ENCODE measurements at regions of chr21 and their contacts with region 1.

Region 1: DNA sequence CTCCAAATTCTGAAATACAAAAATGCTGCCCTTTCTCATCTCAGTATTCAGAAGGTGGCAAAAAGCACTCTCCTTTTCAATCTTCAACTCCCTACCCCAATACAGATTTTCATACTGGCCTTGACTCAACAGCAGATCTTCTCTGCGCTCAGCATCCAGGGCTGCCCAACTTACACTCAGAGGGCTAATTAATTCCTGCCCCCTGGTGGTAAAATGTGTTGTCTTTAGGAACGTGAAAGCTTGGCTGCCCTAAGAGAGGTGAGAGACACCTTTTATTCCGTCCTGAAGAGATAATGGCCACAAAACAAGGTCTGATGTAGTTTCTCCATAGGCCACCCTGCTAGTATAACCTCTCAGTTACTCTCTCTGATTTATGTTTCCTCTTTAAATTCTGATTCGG is 25.0 kb downstream of the KRTAP24-1 start:
- DNase-seq: peak; percentile 36
- H3K4me3 Mint-ChIP-seq: no peak overlapping the region
- H3K27ac Mint-ChIP-seq: peak overlapping the region; percentile 60
- H3K4me1 Mint-ChIP-seq: peaks cover 17% of the 10 kb centered on the region
- H3K27me3 Mint-ChIP-seq: no peaks in the 10 kb centered on the region
- CTCF ChIP-seq: no peak

Region 2: GRCh38 chr21:30044445-30045064 is 213.2 kb before region 1 on chr21:
- CTCF ChIA-PET with region 1: interaction called, 9 read pairs
- intact Hi-C with region 1: loop called (anchors 1 kb)
- DNase-seq: peak; percentile 2
- H3K4me3 Mint-ChIP-seq: no peak overlapping the region
- H3K27ac Mint-ChIP-seq: no peak overlapping the region
- H3K4me1 Mint-ChIP-seq: no peaks in the 10 kb centered on the region
- H3K27me3 Mint-ChIP-seq: peaks cover 7% of the 10 kb centered on the region
- CTCF ChIP-seq: peak; percentile 46

Region 3: GRCh38 chr21:30072496-30072895 is 185.3 kb before region 1 on chr21:
- CTCF ChIA-PET with region 1: no interaction called
- intact Hi-C with region 1: loop called (anchors 5 kb)
- DNase-seq: peak; percentile 46
- H3K4me3 Mint-ChIP-seq: no peak overlapping the region
- H3K27ac Mint-ChIP-seq: no peak overlapping the region
- H3K4me1 Mint-ChIP-seq: peaks cover 8% of the 10 kb centered on the region
- H3K27me3 Mint-ChIP-seq: peaks cover 13% of the 10 kb centered on the region
- CTCF ChIP-seq: no peak

Measured in Calu3 (cell line).